ENCODE measurements at regions of chr6 and their contacts with region 1.

Region 1: GRCh38 chr6:150891888-150892485 is 26.5 kb downstream of the MTHFD1L start:
- DNase-seq: peak; percentile 67
- H3K4me3 Mint-ChIP-seq: no peak overlapping the region
- H3K27ac Mint-ChIP-seq: no peak overlapping the region
- H3K4me1 Mint-ChIP-seq: peaks cover 18% of the 10 kb centered on the region
- H3K27me3 Mint-ChIP-seq: no peaks in the 10 kb centered on the region
- CTCF ChIP-seq: peak; percentile 42

Region 2: GRCh38 chr6:151004415-151005024 is 112.5 kb after region 1 on chr6:
- CTCF ChIA-PET with region 1: no interaction called
- intact Hi-C with region 1: no loop called
- DNase-seq: peak; percentile 2
- H3K4me3 Mint-ChIP-seq: peak overlapping the region; percentile 59
- H3K27ac Mint-ChIP-seq: peak overlapping the region; percentile 82
- H3K4me1 Mint-ChIP-seq: peaks cover 18% of the 10 kb centered on the region
- H3K27me3 Mint-ChIP-seq: no peaks in the 10 kb centered on the region
- CTCF ChIP-seq: no peak

Region 3: DNA sequence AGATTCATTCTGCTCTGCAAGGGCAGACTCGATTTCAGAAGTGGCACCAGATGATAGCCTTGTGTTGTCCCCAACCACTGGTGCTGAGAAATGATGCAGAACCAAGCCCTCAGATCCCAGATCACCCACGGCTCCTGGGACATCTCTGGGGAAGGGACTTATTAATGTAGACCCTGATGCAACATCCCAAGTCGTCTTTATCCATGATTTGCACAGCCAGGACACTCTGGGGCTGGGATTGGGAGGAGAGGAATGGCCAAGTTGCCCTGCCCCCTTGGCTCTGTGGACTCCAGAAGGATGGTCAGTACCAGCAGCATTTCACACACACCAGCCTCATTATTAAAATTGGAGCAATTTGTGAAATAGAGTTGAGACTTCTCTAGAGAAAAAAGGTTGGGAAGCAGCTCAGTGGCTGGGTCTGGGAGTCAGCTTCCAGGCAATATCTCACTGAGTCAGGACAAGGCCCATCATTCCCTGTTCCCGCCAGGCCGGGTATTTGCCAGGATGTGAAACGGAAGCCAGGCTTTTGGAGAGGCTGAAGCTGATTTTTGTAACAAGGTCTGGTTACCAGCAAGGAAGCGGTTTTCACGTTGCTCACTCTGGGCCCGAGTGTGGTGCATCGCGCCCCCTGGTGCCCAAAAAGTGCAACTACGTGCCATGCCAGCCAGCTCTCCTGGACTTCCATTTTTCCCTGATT is 432.0 kb after region 1 on chr6:
- CTCF ChIA-PET with region 1: interaction called, 17 read pairs
- intact Hi-C with region 1: loop called (anchors 2 kb)
- DNase-seq: peak; percentile 84
- H3K4me3 Mint-ChIP-seq: peak overlapping the region; percentile 76
- H3K27ac Mint-ChIP-seq: peak overlapping the region; percentile 61
- H3K4me1 Mint-ChIP-seq: peaks cover 14% of the 10 kb centered on the region
- H3K27me3 Mint-ChIP-seq: no peaks in the 10 kb centered on the region
- CTCF ChIP-seq: peak; percentile 87

Region 4: DNA sequence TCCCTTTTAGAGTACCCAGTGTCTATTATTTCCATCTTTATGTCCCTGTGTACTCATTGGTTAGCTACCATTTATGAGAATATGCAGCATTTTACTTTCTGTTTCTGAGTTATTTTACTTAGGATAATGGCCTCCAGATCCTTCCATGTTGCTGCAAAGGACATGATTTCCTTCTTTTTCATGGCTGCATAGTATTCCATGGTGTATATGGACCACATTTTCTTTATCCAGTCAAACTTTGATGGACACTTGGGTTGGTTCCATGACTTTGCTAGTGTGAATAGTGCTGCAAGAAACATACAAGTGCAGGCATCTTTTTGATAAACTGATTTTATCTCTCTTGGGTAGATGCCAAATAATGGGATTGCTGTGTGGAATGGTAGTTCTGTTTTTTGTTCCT is 443.9 kb after region 1 on chr6:
- CTCF ChIA-PET with region 1: interaction called, 17 read pairs
- intact Hi-C with region 1: loop called (anchors 2 kb)
- DNase-seq: no peak
- H3K4me3 Mint-ChIP-seq: no peak overlapping the region
- H3K27ac Mint-ChIP-seq: no peak overlapping the region
- H3K4me1 Mint-ChIP-seq: no peaks in the 10 kb centered on the region
- H3K27me3 Mint-ChIP-seq: no peaks in the 10 kb centered on the region
- CTCF ChIP-seq: no peak